H1 (cell line): ENCODE measurements at regions of chr13 and their contacts with region 1.

Region 1: GRCh38 chr13:113393563-113394338 is 29.8 kb upstream of the GRTP1 start:
- DNase-seq: peak; percentile 60 to 92
- H3K4me3 ChIP-seq: peak overlapping the region; percentile 51 to 65 (median 56)
- H3K27ac ChIP-seq: no peak overlapping the region; the same call in 1 of the 2 replicates
- H3K4me1 ChIP-seq: peaks cover 8 to 16% (median 12%) of the 10 kb centered on the region in 4 experiments
- H3K27me3 ChIP-seq: no peaks in the 10 kb centered on the region
- CTCF ChIP-seq: peak in 2 of 3 experiments; percentile 70 to 95; a peak in 3 of 4 replicates
- EP300 ChIP-seq: no peak
- POLR2A ChIP-seq: no peak
- RAD21 ChIP-seq: peak; percentile 73 to 95

Region 2: GRCh38 chr13:113275387-113275786 is 118.4 kb before region 1 on chr13:
- CTCF ChIA-PET with region 1: interaction called, 13 read pairs
- POLR2A ChIA-PET with region 1: no interaction called
- DNase-seq: peak in 1 of 2 experiments; percentile 59
- H3K4me3 ChIP-seq: no peak overlapping the region
- H3K27ac ChIP-seq: no peak overlapping the region
- H3K4me1 ChIP-seq: no peaks in the 10 kb centered on the region
- H3K27me3 ChIP-seq: no peaks in the 10 kb centered on the region
- CTCF ChIP-seq: peak; percentile 29 to 61 (median 57)
- EP300 ChIP-seq: no peak
- POLR2A ChIP-seq: no peak
- RAD21 ChIP-seq: peak; percentile 55 to 62

Region 3: DNA sequence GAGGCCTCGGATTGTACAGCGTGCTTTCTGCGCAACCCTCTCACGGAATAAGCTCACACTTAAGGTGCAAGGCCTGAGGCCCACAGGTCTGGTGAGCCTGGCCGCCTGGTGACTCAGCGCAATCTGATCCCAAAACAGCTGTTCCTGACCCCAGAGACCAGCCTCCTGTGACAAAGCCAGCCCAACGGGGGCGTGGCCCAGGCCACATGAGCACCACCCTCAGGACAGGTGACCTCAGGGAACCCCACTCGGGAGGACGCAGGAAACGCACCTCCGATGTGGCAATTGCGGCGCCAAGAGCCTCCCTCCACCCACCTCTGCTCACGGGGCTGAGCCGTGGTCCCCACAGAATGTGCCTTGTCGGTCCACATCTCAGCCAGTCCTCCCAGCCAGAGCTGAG is 56.2 kb before region 1 on chr13:
- CTCF ChIA-PET with region 1: interaction called, 10 read pairs
- POLR2A ChIA-PET with region 1: interaction called, 8 read pairs
- DNase-seq: peak; percentile 19 to 72
- H3K4me3 ChIP-seq: no peak overlapping the region
- H3K27ac ChIP-seq: no peak overlapping the region
- H3K4me1 ChIP-seq: peaks cover 0 to 5% (median 0%) of the 10 kb centered on the region in 4 experiments; a peak in 1 of 7 replicates
- H3K27me3 ChIP-seq: no peaks in the 10 kb centered on the region
- CTCF ChIP-seq: no peak
- EP300 ChIP-seq: no peak
- POLR2A ChIP-seq: no peak
- RAD21 ChIP-seq: no peak

Region 4: DNA sequence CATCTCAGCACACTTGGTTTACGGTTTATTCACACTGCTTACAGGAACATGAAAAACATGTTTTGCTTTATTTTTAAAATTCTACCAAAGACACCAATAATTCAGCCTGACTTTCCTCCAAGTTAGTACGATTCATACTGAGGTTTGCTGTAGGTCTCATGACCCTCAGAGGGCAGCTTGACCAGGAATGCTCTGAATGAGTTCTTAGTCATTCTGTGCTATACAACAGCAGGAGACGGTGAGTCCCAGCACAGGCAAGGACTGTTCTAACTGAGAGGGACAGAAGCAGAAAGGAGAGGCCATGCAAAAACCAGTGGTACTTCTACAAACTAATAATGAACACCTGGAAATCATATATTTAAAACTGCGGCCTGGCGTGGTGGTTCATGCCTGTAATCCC is 36.2 kb before region 1 on chr13:
- CTCF ChIA-PET with region 1: interaction called, 37 read pairs
- POLR2A ChIA-PET with region 1: interaction called, 34 read pairs
- DNase-seq: no peak
- H3K4me3 ChIP-seq: no peak overlapping the region
- H3K27ac ChIP-seq: no peak overlapping the region
- H3K4me1 ChIP-seq: peaks cover 0 to 5% (median under 1%) of the 10 kb centered on the region in 4 experiments; a peak in 3 of 7 replicates
- H3K27me3 ChIP-seq: no peaks in the 10 kb centered on the region
- CTCF ChIP-seq: no peak
- EP300 ChIP-seq: no peak
- POLR2A ChIP-seq: no peak
- RAD21 ChIP-seq: no peak

Region 5: GRCh38 chr13:113374511-113375175 is 19.1 kb before region 1 on chr13:
- CTCF ChIA-PET with region 1: interaction called, 10 read pairs
- POLR2A ChIA-PET with region 1: interaction called, 12 read pairs
- DNase-seq: no peak
- H3K4me3 ChIP-seq: no peak overlapping the region
- H3K27ac ChIP-seq: no peak overlapping the region
- H3K4me1 ChIP-seq: peaks cover 3 to 18% (median 10%) of the 10 kb centered on the region in 4 experiments
- H3K27me3 ChIP-seq: no peaks in the 10 kb centered on the region
- CTCF ChIP-seq: no peak
- EP300 ChIP-seq: no peak
- POLR2A ChIP-seq: no peak
- RAD21 ChIP-seq: no peak

Region 6: DNA sequence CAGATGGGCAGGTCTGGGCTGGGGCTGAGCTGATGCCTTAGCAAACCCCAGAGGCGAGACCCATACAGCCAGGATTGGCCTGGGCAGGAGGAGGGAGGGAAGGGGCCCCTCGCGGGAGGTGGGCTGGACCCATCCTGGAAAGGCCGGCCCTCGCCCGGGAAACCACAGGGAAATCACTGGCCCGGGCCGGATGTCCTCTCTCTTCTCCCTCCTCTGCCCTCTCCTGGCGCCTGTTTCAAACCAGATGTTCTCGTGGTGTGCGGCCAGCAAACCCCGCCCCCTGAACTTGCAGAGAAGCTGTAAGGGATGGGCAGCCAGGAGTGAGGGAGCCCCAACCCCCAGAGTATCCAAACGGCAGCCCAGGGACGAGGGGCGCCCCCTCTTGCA is 408.4 kb after region 1 on chr13:
- CTCF ChIA-PET with region 1: no interaction called
- POLR2A ChIA-PET with region 1: no interaction called
- DNase-seq: peak in 1 of 2 experiments; percentile 81
- H3K4me3 ChIP-seq: peak overlapping the region in 1 of 4 experiments; percentile 30; a peak in 1 of 8 replicates
- H3K27ac ChIP-seq: no peak overlapping the region
- H3K4me1 ChIP-seq: peaks cover 0 to 8% (median 6%) of the 10 kb centered on the region in 4 experiments; a peak in 4 of 7 replicates
- H3K27me3 ChIP-seq: no peaks in the 10 kb centered on the region
- CTCF ChIP-seq: peak in 2 of 3 experiments; percentile 1 to 21; a peak in 2 of 4 replicates
- EP300 ChIP-seq: no peak
- POLR2A ChIP-seq: no peak
- RAD21 ChIP-seq: peak in 1 of 2 experiments; percentile 34; a peak in 2 of 4 replicates